Natural killer cell (primary cell): ENCODE measurements at regions of chr6 and their contacts with region 1.

Region 1: GRCh38 chr6:34526992-34527728 is 29.0 kb downstream of the SPDEF start:
- DNase-seq: peak; percentile 93 to 97
- ATAC-seq: peak; percentile 96 to 99 (median 98)
- H3K4me3 ChIP-seq: peak overlapping the region; percentile 5
- H3K4me3 Mint-ChIP-seq: peak overlapping the region; percentile 73
- H3K27ac ChIP-seq: peak overlapping the region; percentile 2
- H3K27ac Mint-ChIP-seq: peak overlapping the region in 1 of 2 donors; percentile 30
- H3K4me1 ChIP-seq: peaks cover 42% of the 10 kb centered on the region
- H3K4me1 Mint-ChIP-seq: peaks cover 20 to 21% of the 10 kb centered on the region in 2 donors
- H3K27me3 ChIP-seq: no peaks in the 10 kb centered on the region
- H3K27me3 Mint-ChIP-seq: no peaks in the 10 kb centered on the region
- CTCF ChIP-seq: peak; percentile 72

Region 2: GRCh38 chr6:34608321-34609091 is 81.3 kb after region 1 on chr6:
- intact Hi-C with region 1: loop called (anchors 2 kb)
- DNase-seq: no peak
- ATAC-seq: no peak
- H3K4me3 ChIP-seq: no peak overlapping the region
- H3K4me3 Mint-ChIP-seq: no peak overlapping the region
- H3K27ac ChIP-seq: no peak overlapping the region
- H3K27ac Mint-ChIP-seq: peak overlapping the region in 1 of 2 donors; percentile 29
- H3K4me1 ChIP-seq: no peaks in the 10 kb centered on the region
- H3K4me1 Mint-ChIP-seq: peaks cover 17 to 31% of the 10 kb centered on the region in 2 donors
- H3K27me3 ChIP-seq: no peaks in the 10 kb centered on the region
- H3K27me3 Mint-ChIP-seq: no peaks in the 10 kb centered on the region
- CTCF ChIP-seq: no peak